Sigmoid colon (tissue), 7 donors: ENCODE measurements at regions of chr22 and their contacts with region 1.

Region 1: GRCh38 chr22:43031617-43032016 is 16.7 kb upstream of the PACSIN2 start:
- DNase-seq: no peak
- H3K4me3 ChIP-seq: no peak overlapping the region
- H3K27ac ChIP-seq: no peak overlapping the region
- H3K4me1 ChIP-seq: peaks cover 0 to 11% (median 3%) of the 10 kb centered on the region in 4 donors
- H3K27me3 ChIP-seq: no peaks in the 10 kb centered on the region
- CTCF ChIP-seq: no peak
- EP300 ChIP-seq: no peak
- POLR2A ChIP-seq: no peak

Region 2: DNA sequence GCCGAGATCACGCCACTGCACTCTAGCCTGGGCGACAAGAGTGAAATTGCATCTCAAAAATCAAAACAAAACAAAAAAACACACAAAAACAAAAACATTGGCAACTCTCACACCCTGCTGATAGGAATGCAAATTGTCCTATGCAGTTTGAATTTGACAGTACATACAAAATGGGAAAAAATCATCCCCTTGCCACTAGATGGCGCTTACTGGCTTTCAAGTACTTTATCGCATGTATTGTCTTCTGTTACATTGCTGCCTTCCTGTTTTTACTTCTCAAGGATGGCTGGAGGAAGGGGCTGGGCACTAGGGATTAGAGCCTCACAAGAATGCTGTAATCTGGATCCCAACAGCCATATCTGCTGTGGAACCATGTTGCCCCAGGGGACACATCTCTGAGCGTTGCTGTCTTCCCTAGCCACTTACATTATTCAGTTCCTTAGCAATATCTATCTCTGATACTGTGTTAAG is 251.5 kb before region 1 on chr22:
- intact Hi-C with region 1: loop called (anchors 5 kb)
- DNase-seq: no peak
- H3K4me3 ChIP-seq: no peak overlapping the region
- H3K27ac ChIP-seq: no peak overlapping the region
- H3K4me1 ChIP-seq: peaks cover 0 to 3% (median 0%) of the 10 kb centered on the region in 4 donors
- H3K27me3 ChIP-seq: no peaks in the 10 kb centered on the region
- CTCF ChIP-seq: peak; percentile 84 to 96 (median 94)
- EP300 ChIP-seq: no peak
- POLR2A ChIP-seq: no peak

Region 3: DNA sequence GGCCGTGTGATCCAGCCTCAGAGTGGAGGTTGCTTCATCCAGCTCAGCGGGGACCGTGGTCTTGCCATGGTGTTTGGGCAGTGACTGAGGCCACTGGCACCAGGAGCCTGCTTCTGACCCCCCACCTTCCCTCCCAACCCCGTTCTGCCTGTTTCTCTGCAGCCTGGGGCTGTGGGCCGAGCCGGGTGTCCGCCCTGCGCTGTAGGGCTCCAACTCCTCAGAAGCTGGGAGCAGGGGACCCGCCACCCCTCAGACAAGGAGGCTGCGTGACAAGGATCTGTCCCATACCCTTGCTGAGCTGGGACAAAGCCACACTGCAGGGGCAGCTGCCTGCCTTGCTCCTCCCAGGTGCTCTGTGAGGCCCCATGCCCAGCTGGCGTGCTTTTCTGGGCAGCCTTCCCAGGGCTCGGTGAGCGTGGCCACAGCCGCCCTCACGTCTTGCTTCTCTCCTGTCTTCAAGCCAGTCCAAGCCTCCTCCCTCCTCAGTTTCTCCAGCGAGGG is 162.8 kb before region 1 on chr22:
- intact Hi-C with region 1: loop called (anchors 5 kb)
- DNase-seq: peak; percentile 90
- H3K4me3 ChIP-seq: no peak overlapping the region
- H3K27ac ChIP-seq: peak overlapping the region; percentile 59 to 74 (median 68)
- H3K4me1 ChIP-seq: peaks cover 0 to 24% (median 20%) of the 10 kb centered on the region in 4 donors
- H3K27me3 ChIP-seq: no peaks in the 10 kb centered on the region
- CTCF ChIP-seq: no peak
- EP300 ChIP-seq: no peak
- POLR2A ChIP-seq: no peak

Region 4: GRCh38 chr22:42901790-42902508 is 129.7 kb before region 1 on chr22:
- intact Hi-C with region 1: loop called (anchors 5 kb)
- DNase-seq: no peak
- H3K4me3 ChIP-seq: no peak overlapping the region
- H3K27ac ChIP-seq: peak overlapping the region; percentile 59 to 75 (median 69)
- H3K4me1 ChIP-seq: peaks cover 0 to 57% (median 44%) of the 10 kb centered on the region in 4 donors
- H3K27me3 ChIP-seq: no peaks in the 10 kb centered on the region
- CTCF ChIP-seq: no peak
- EP300 ChIP-seq: no peak
- POLR2A ChIP-seq: no peak

Region 5: DNA sequence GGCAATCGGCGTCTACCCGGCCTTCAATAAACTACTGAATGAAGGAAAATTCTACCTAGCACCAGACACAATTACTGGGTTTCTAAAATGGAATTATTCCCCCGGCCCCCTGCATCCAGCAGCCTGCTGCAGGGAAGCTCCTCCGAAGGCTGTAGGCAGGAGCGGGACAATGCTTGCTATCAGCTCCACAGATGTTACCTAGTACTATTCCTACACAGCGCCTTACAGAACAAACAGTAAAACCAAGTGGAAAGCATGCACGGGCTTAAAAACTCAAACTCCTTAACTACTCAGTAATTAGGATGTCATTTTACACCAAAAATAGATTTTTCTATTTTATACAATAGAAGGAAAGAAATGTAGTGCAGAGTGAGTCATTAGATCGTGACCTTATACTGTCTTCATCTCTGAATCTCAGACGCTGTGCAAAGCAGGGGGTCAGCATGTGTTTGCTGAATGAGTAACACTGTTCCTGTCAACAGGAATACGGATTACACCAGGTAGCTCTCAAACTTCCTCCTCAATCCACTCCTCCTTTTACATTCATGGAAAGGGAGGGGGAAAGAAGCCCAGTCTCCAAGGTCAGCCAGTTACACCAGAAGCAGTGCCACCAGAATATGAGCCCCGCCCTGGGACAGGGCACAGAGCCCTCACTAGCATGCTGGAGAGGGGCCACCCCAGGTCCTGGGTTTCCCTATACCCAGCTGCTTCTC is 91.5 kb before region 1 on chr22:
- intact Hi-C with region 1: no loop called
- DNase-seq: no peak
- H3K4me3 ChIP-seq: no peak overlapping the region
- H3K27ac ChIP-seq: peak overlapping the region; percentile 76 to 94 (median 90)
- H3K4me1 ChIP-seq: peaks cover 0 to 78% (median 70%) of the 10 kb centered on the region in 4 donors
- H3K27me3 ChIP-seq: no peaks in the 10 kb centered on the region
- CTCF ChIP-seq: no peak
- EP300 ChIP-seq: no peak
- POLR2A ChIP-seq: no peak

Region 6: DNA sequence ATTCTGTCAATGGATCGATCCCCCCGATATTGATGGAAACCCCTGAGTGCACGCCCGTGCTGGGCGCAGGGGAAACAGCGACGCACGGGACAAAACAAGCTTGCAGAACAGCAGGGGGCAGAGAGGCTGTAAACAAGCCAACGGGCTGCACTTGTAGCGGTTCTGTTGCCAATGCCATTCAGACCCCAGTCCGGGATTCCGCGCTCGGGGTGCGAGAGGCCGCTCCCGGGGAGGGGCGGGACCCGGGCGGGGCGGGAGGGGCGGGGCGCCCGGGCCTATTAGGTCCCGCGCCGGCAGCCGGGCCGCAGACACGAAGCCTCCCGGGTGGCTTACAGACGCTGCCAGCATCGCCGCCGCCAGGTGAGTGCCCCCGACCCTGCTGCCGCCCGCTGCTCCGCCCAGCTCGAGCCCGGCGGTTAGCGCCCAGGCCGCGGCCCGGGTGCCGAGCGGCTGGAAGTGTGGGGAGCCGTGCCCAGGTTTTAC is 78.9 kb after region 1 on chr22 and contains the start of gene BIK:
- intact Hi-C with region 1: no loop called
- DNase-seq: no peak
- H3K4me3 ChIP-seq: peak within 1 kb of the TSS; percentile 23 to 53 (median 44)
- H3K27ac ChIP-seq: no peak within 1 kb of the TSS
- H3K4me1 ChIP-seq: peaks cover 0 to 22% (median 19%) of the 10 kb centered on the region in 4 donors
- H3K27me3 ChIP-seq: peaks cover 27 to 64% (median 58%) of the 10 kb centered on the region in 3 donors
- CTCF ChIP-seq: no peak
- EP300 ChIP-seq: no peak
- POLR2A ChIP-seq: no peak
- total RNA-seq, gene BIK: not detected